ENCODE measurements at regions of chr11 and their contacts with region 1.

Region 1: DNA sequence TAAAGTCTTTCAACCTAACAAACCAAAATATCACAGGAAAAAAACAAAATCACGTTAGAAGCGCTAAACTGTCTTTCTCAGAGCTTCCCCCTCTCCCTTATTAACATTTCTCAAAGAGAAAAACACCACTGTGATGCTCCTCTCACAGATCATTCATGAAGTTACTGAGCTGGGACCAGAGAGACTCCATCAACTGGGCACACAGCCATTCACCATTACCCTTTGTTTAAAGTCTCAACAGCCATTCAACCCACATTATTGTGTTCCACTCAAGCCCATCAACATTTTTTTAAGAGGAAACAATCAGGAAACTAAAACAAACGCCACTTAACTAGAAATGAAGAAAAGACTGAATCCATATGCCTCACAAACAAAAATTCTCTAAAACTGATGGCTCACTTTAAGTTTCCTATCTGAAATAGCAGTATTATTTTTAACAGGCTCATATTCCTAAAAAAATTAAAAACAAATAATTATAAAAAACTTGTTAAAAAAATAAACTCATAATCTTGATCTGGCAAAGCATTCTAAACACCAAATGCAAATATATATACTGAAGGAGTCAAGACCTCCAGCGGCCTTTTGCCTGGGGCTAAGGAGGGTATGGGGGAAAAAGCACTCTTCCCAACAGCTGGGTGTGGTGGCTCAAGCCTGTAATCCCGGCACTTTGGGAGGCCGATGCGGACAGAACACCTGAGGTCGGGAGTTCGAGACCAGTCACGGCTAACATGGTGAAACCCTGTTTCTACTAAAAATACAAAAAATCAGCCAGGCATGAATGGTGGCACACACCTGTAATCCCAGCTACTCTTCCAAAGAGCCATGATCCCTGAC is 14.0 kb downstream of the CELF1 start:
- DNase-seq: no peak
- ATAC-seq: peak; percentile 25; the same call in 1 of the 2 replicates
- H3K4me3 ChIP-seq: no peak overlapping the region
- H3K27ac ChIP-seq: no peak overlapping the region
- H3K4me1 ChIP-seq: peaks cover 15% of the 10 kb centered on the region
- H3K27me3 ChIP-seq: no peaks in the 10 kb centered on the region
- CTCF ChIP-seq: no peak
- POLR2A ChIP-seq: no peak
- RAD21 ChIP-seq: no peak

Region 2: GRCh38 chr11:47233989-47234668 is 304.8 kb before region 1 on chr11:
- CTCF ChIA-PET with region 1: no interaction called
- POLR2A ChIA-PET with region 1: no interaction called
- dilution Hi-C with region 1: no loop called
- in situ Hi-C with region 1: no loop called
- intact Hi-C with region 1: no loop called
- DNase-seq: peak; percentile 67
- ATAC-seq: peak; percentile 83
- H3K4me3 ChIP-seq: no peak overlapping the region
- H3K27ac ChIP-seq: peak overlapping the region; percentile 51
- H3K4me1 ChIP-seq: peaks cover 14% of the 10 kb centered on the region
- H3K27me3 ChIP-seq: no peaks in the 10 kb centered on the region
- CTCF ChIP-seq: peak; percentile 50
- POLR2A ChIP-seq: no peak
- RAD21 ChIP-seq: peak; percentile 43

Region 3: DNA sequence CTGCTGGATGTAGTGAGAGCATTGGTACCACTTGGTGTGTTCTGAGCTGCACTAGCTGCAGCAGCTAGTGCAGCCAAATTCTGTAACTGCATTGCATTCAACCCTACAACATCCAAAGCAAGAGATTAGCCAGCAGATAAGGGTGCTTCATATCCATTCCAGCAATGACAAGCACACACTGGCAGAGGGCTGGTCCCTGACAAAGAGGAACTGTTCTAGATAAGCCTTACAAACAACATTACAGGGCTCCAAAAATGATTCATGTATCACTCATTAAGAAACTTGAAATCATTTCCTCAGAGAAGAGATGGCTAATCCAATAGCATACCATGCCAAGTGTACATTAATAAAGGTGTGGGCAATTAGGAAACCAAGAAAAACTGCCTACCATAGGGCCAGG is 61.6 kb before region 1 on chr11:
- CTCF ChIA-PET with region 1: no interaction called
- POLR2A ChIA-PET with region 1: no interaction called
- dilution Hi-C with region 1: no loop called
- in situ Hi-C with region 1: no loop called
- intact Hi-C with region 1: loop called (anchors 10 kb)
- DNase-seq: peak; percentile 69
- ATAC-seq: peak; percentile 66
- H3K4me3 ChIP-seq: no peak overlapping the region
- H3K27ac ChIP-seq: no peak overlapping the region
- H3K4me1 ChIP-seq: peaks cover 7% of the 10 kb centered on the region
- H3K27me3 ChIP-seq: no peaks in the 10 kb centered on the region
- CTCF ChIP-seq: no peak
- POLR2A ChIP-seq: no peak
- RAD21 ChIP-seq: no peak